OCI-LY7 (cell line): ENCODE measurements at regions of chr13 and their contacts with region 1.

Region 1: DNA sequence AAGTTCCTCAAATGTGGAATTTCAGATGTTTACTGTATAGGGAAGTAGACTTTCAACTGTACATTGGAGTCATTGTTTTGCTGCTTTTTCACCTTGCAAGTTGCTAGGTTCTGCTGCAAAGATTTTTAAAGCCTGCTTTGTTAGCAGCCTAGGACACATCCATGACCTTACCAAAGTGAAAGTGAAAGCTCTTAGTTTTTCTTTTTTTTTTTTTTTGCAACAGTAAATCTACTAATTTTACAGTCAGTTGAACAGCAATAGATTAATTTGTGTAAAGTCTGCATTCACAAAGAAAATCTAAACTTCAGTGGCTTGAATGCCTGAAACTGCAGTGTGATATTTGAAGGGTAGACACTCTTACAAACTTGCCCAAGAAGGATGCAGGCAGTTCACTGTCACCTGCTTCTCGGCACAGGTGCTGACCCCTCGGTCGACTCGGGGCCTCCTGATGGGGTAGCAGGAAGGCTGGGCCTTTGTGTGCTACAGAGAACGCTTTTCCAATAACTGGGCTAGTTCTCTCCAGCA is 5.0 kb upstream of the MTIF3 start:
- DNase-seq: peak; percentile 52
- H3K4me3 ChIP-seq: peak overlapping the region; percentile 60
- H3K27ac ChIP-seq: peak overlapping the region; percentile 27
- H3K4me1 ChIP-seq: peaks cover 33% of the 10 kb centered on the region
- CTCF ChIP-seq: no peak

Region 2: DNA sequence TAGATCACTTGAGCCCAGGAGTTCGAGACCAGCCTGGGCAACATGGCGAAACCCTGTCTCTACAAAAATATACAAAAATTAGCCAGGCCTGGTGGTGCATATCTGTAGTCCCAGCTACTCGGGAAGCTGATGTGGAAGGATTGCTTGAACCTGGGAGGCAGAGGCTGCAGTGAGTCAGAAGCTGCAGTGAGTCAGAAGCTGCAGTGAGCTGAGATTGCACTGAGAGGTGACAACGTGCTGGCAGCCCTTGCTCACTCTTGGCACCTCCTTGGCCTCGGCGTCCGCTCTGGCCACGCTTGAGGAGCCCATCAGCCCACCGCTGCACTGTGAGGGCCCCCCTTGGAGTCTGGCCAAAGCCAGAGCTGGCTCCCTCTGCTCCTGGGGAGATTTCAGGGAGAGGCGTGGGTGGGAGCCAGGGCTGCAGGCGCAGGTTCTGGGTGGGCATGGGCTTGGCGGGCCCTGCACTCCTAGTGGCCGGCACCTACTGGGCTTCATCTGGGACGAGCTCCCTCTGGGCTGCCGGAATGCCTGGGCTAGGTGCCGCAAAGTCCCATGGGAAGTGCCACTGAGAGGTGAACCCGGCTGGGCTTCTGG is 243.5 kb before region 1 on chr13:
- CTCF ChIA-PET with region 1: no interaction called
- POLR2A ChIA-PET with region 1: no interaction called
- intact Hi-C with region 1: no loop called
- DNase-seq: no peak
- H3K4me3 ChIP-seq: no peak overlapping the region
- H3K27ac ChIP-seq: no peak overlapping the region
- H3K4me1 ChIP-seq: no peaks in the 10 kb centered on the region
- CTCF ChIP-seq: no peak

Region 3: DNA sequence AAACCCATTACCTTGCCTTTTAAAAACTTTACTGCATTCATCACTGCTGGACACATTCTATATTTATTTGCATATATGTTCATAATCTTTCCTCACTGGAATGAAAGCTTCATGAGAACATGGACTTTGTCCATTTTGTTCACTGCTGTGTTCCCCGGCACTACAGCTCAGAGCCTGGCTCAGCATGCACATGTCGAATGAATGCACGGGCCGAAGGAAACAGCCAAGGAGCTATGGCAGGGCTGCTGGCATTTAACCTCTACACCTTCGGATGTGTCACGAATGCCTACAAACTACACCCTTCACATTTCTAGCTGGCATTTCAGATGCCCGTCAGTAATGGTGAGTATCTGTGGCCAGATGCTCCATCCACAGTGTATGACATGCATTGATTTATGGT is 12.6 kb before region 1 on chr13:
- CTCF ChIA-PET with region 1: no interaction called
- POLR2A ChIA-PET with region 1: interaction called, 15 read pairs
- intact Hi-C with region 1: no loop called
- DNase-seq: no peak
- H3K4me3 ChIP-seq: no peak overlapping the region
- H3K27ac ChIP-seq: no peak overlapping the region
- H3K4me1 ChIP-seq: peaks cover 24% of the 10 kb centered on the region
- CTCF ChIP-seq: no peak